Activated CD8-positive, alpha-beta T cell treated with anti-CD3 and anti-CD28 coated beads for 36 hours (primary cell): ENCODE measurements at regions of chr6 and their contacts with region 1.

Region 1: DNA sequence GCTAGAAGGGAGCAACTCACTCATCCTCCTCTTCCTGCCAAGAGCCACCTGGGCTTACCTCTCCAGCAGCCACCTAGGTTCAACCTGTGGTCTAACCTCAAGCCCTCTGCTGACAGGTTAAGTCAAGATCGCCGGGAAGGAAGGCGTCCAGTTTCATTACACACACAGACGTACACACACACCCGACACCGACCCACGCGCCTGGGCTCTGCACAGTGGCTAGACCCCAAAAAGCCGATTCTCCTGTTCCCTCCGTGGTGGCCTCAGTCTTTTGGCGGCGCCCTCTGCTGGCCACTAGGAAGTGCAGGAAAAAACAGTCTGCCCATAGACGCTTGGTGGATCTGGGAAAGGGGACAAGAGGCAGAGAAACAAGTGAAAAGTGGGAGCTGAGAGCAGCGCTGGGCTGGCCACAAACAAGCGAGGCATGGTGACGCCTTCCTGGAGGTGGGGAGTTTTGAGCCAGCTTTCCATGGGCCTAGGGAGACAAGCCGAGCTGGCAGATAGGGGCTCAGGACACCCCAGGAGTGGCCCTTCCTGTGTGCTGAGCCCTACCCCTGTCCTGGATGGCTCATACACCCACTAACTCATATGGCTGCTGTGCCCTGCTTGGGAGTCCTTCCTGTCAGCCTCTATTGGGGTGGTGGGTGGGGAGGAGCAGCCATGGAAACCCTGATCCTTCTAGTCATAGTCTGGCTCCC is 52.7 kb downstream of the MRPL14 start:
- DNase-seq: peak; percentile 96
- ATAC-seq: peak; percentile 71
- H3K4me3 Mint-ChIP-seq: peak overlapping the region; percentile 98
- H3K27ac Mint-ChIP-seq: peak overlapping the region; percentile 90
- H3K4me1 Mint-ChIP-seq: peaks cover 25% of the 10 kb centered on the region
- H3K27me3 Mint-ChIP-seq: peaks cover 16% of the 10 kb centered on the region
- CTCF ChIP-seq: peak; percentile 89

Region 2: GRCh38 chr6:43723737-43724295 is 350.8 kb before region 1 on chr6:
- CTCF ChIA-PET with region 1: interaction called, 37 read pairs
- POLR2A ChIA-PET with region 1: interaction called, 5 read pairs
- intact Hi-C with region 1: loop called (anchors 2 kb)
- DNase-seq: peak; percentile 89
- ATAC-seq: peak; percentile 76
- H3K4me3 Mint-ChIP-seq: peak overlapping the region; percentile 52
- H3K27ac Mint-ChIP-seq: peak overlapping the region; percentile 91
- H3K4me1 Mint-ChIP-seq: peaks cover 35% of the 10 kb centered on the region
- H3K27me3 Mint-ChIP-seq: no peaks in the 10 kb centered on the region
- CTCF ChIP-seq: peak; percentile 71

Region 3: GRCh38 chr6:43758617-43759050 is 316.0 kb before region 1 on chr6:
- CTCF ChIA-PET with region 1: interaction called, 10 read pairs
- POLR2A ChIA-PET with region 1: no interaction called
- intact Hi-C with region 1: no loop called
- DNase-seq: peak; percentile 49
- ATAC-seq: peak; percentile 79
- H3K4me3 Mint-ChIP-seq: no peak overlapping the region
- H3K27ac Mint-ChIP-seq: no peak overlapping the region
- H3K4me1 Mint-ChIP-seq: peaks cover 3% of the 10 kb centered on the region
- H3K27me3 Mint-ChIP-seq: no peaks in the 10 kb centered on the region
- CTCF ChIP-seq: peak; percentile 78

Region 4: DNA sequence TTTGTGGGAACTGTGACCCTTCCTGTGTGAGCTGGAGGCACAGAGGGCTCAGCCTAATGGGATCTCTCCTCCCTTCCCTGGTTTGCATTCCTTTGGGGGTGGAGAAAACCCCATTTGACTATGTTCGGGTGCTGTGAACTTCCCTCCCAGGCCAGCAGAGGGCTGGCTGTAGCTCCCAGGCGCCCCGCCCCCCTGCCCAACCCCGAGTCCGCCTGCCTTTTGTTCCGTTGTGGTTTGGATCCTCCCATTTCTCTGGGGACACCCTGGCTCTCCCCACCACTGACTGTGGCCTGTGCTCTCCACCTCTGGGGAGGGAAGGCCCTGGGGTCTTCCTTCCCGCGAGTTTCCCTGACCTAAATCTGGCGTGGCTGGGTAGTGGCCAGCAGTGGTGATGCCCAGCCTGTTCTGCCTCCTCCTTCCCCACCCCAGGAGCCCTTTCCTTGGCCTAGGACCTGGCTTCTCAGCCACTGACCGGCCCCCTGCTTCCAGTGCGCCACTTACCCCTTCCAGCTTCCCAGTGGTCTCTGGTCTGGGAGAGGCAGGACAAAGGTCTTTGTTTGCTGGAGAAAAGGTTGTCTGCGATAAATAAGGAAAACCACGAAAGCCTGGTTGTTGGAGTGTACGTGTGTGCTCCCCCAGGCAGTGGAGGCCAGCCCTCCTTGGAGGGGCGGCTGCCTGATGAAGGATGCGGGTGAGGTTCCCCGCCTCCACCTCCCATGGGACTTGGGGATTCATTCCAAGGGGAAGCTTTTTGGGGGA is 299.6 kb before region 1 on chr6:
- CTCF ChIA-PET with region 1: interaction called, 81 read pairs
- POLR2A ChIA-PET with region 1: interaction called, 13 read pairs
- intact Hi-C with region 1: no loop called
- DNase-seq: peak; percentile 79
- ATAC-seq: peak; percentile 18
- H3K4me3 Mint-ChIP-seq: peak overlapping the region; percentile 97
- H3K27ac Mint-ChIP-seq: no peak overlapping the region
- H3K4me1 Mint-ChIP-seq: peaks cover 42% of the 10 kb centered on the region
- H3K27me3 Mint-ChIP-seq: peaks cover 2% of the 10 kb centered on the region
- CTCF ChIP-seq: peak; percentile 81

Region 5: DNA sequence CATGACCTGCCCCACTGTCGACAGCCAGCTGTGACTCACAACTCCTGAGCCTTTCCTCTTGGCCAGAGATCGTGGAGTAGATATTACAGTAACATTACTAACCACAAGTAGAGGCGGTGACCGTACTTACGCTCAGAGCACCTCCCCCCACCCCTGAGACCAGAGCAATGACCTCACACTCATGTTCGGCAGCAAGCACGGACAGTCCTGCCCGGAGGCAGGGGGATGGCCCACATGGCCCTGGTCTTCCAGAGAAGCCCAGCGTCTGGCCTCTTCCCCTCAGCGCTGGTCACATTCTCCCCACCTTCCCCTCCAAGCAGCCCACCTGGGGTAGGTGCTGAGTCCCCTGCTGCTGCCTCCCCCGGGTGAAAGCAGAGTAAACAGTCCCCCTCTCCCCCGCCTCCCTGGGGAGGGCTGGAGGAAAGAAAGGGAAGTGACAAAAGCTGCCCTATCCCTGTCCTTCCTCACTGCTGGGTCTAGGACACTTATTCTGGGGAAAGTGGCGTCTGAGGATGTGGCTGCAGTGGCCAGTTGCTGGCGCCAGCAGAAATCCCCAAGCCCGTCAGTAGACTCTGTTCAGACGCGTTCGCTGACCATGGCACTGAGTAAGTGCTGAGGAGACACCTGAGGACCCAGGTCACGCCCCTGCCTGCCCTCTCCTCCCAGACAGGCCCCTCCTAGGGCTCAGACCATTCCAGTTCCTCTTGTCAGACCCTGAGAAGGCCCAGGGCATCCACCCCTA is 15.8 kb before region 1 on chr6:
- CTCF ChIA-PET with region 1: interaction called, 59 read pairs
- POLR2A ChIA-PET with region 1: interaction called, 3 read pairs
- intact Hi-C with region 1: no loop called
- DNase-seq: peak; percentile 64
- ATAC-seq: peak; percentile 90
- H3K4me3 Mint-ChIP-seq: no peak overlapping the region
- H3K27ac Mint-ChIP-seq: no peak overlapping the region
- H3K4me1 Mint-ChIP-seq: peaks cover 9% of the 10 kb centered on the region
- H3K27me3 Mint-ChIP-seq: peaks cover 2% of the 10 kb centered on the region
- CTCF ChIP-seq: no peak

Region 6: GRCh38 chr6:44086931-44087574 is 12.5 kb after region 1 on chr6:
- CTCF ChIA-PET with region 1: interaction called, 23 read pairs
- POLR2A ChIA-PET with region 1: interaction called, 3 read pairs
- intact Hi-C with region 1: no loop called
- DNase-seq: no peak
- ATAC-seq: no peak
- H3K4me3 Mint-ChIP-seq: no peak overlapping the region
- H3K27ac Mint-ChIP-seq: no peak overlapping the region
- H3K4me1 Mint-ChIP-seq: peaks cover 11% of the 10 kb centered on the region
- H3K27me3 Mint-ChIP-seq: no peaks in the 10 kb centered on the region
- CTCF ChIP-seq: no peak